ENCODE measurements at regions of chr6 and their contacts with region 1.

Region 1: GRCh38 chr6:134640975-134641429 is 308.9 kb downstream of the ALDH8A1 start:
- DNase-seq: peak; percentile 57
- H3K4me3 ChIP-seq: no peak overlapping the region; a peak in 1 of 4 replicates
- H3K27ac ChIP-seq: no peak overlapping the region; a peak in 1 of 4 replicates
- H3K4me1 ChIP-seq: peaks cover 0 to 3% of the 10 kb centered on the region in 2 experiments; a peak in 2 of 4 replicates
- H3K27me3 ChIP-seq: no peaks in the 10 kb centered on the region
- CTCF ChIP-seq: peak; percentile 84
- EP300 ChIP-seq: no peak
- RAD21 ChIP-seq: peak; percentile 83

Region 2: DNA sequence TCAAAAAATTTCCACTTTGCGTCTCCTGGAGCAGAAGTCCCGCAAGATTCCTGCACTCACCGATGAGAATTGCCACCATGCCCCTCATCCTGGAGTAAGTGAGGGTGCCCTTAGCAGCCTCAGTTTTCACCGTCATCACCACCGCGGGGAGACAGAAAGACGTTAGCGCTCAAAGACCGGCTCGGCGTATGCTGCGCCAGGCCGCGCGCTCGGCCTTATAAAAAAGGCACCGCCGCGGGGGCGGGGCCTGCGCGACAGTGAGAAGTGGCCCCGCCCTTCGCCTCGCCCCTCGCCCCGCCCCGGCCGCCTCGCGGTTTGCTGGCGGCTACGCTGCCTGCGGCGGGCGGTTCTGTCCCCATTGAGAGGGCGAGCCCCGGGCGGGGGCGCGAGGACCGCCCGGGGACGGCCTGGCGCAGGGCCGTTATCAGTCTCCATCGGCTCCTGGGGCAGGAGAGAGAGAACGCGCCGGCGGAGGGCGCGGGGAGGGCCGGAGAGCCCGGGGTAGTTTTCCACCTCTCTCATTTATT is 466.3 kb before region 1 on chr6:
- CTCF ChIA-PET with region 1: interaction called, 19 read pairs
- POLR2A ChIA-PET with region 1: no interaction called
- DNase-seq: peak; percentile 90
- H3K4me3 ChIP-seq: peak overlapping the region; percentile 76 to 78
- H3K27ac ChIP-seq: peak overlapping the region; percentile 76 to 94
- H3K4me1 ChIP-seq: peaks cover 16 to 32% of the 10 kb centered on the region in 2 experiments
- H3K27me3 ChIP-seq: no peaks in the 10 kb centered on the region
- CTCF ChIP-seq: no peak
- EP300 ChIP-seq: peak in 1 of 2 experiments; percentile 52; a peak in 1 of 4 replicates
- RAD21 ChIP-seq: peak; percentile 38

Region 3: GRCh38 chr6:134626589-134626988 is 14.4 kb before region 1 on chr6:
- CTCF ChIA-PET with region 1: interaction called, 15 read pairs
- POLR2A ChIA-PET with region 1: no interaction called
- DNase-seq: no peak
- H3K4me3 ChIP-seq: no peak overlapping the region
- H3K27ac ChIP-seq: no peak overlapping the region
- H3K4me1 ChIP-seq: peaks cover 4% of the 10 kb centered on the region in 2 experiments; a peak in 2 of 4 replicates
- H3K27me3 ChIP-seq: no peaks in the 10 kb centered on the region
- CTCF ChIP-seq: 0 out of 2 replicates have a peak, but pooled peaks have one; percentile 7
- EP300 ChIP-seq: no peak
- RAD21 ChIP-seq: no peak

Region 4: GRCh38 chr6:134654751-134655150 is 13.7 kb after region 1 on chr6:
- CTCF ChIA-PET with region 1: interaction called, 14 read pairs
- POLR2A ChIA-PET with region 1: no interaction called
- DNase-seq: no peak
- H3K4me3 ChIP-seq: no peak overlapping the region
- H3K27ac ChIP-seq: no peak overlapping the region
- H3K4me1 ChIP-seq: no peaks in the 10 kb centered on the region
- H3K27me3 ChIP-seq: no peaks in the 10 kb centered on the region
- CTCF ChIP-seq: no peak
- EP300 ChIP-seq: no peak
- RAD21 ChIP-seq: no peak

Region 5: GRCh38 chr6:134662077-134662700 is 21.2 kb after region 1 on chr6:
- CTCF ChIA-PET with region 1: interaction called, 10 read pairs
- POLR2A ChIA-PET with region 1: no interaction called
- DNase-seq: no peak
- H3K4me3 ChIP-seq: no peak overlapping the region
- H3K27ac ChIP-seq: no peak overlapping the region
- H3K4me1 ChIP-seq: no peaks in the 10 kb centered on the region
- H3K27me3 ChIP-seq: no peaks in the 10 kb centered on the region
- CTCF ChIP-seq: no peak
- EP300 ChIP-seq: no peak
- RAD21 ChIP-seq: no peak

Region 6: GRCh38 chr6:134689641-134690040 is 48.6 kb after region 1 on chr6:
- CTCF ChIA-PET with region 1: interaction called, 10 read pairs
- POLR2A ChIA-PET with region 1: no interaction called
- DNase-seq: peak; percentile 69
- H3K4me3 ChIP-seq: no peak overlapping the region
- H3K27ac ChIP-seq: peak overlapping the region in 1 of 2 experiments; percentile 62; a peak in 1 of 4 replicates
- H3K4me1 ChIP-seq: peaks cover 0 to 13% of the 10 kb centered on the region in 2 experiments; a peak in 2 of 4 replicates
- H3K27me3 ChIP-seq: no peaks in the 10 kb centered on the region
- CTCF ChIP-seq: no peak
- EP300 ChIP-seq: peak in 1 of 2 experiments; percentile 77; a peak in 2 of 4 replicates
- RAD21 ChIP-seq: no peak; the same call in 1 of the 2 replicates

Region 7: DNA sequence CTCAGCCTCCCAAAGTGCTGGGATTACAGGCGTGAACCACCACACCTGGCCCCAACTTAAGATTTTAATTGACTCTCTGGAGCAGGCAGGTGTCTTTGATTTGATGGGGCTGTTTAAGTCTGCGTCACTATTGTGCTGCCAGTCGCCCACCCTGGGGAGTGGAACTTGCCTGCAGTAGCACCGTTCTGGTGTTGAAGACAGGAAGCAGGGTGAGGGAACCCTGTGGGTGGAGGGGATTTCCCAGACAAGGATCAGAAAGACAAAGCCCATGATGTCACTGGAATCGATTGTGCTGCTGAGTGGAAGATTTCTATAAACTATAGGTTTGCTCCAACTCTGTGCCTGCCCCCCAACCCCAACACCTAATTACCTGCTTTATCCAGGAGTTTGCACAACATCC is 297.9 kb after region 1 on chr6:
- CTCF ChIA-PET with region 1: interaction called, 17 read pairs
- POLR2A ChIA-PET with region 1: no interaction called
- DNase-seq: no peak
- H3K4me3 ChIP-seq: no peak overlapping the region
- H3K27ac ChIP-seq: no peak overlapping the region
- H3K4me1 ChIP-seq: peaks cover 3 to 4% of the 10 kb centered on the region in 2 experiments; a peak in 2 of 4 replicates
- H3K27me3 ChIP-seq: no peaks in the 10 kb centered on the region
- CTCF ChIP-seq: no peak
- EP300 ChIP-seq: no peak
- RAD21 ChIP-seq: no peak

Measured in SK-N-SH (cell line).